WTC11 (cell line): ENCODE measurements at regions of chr7 and their contacts with region 1.

Region 1: DNA sequence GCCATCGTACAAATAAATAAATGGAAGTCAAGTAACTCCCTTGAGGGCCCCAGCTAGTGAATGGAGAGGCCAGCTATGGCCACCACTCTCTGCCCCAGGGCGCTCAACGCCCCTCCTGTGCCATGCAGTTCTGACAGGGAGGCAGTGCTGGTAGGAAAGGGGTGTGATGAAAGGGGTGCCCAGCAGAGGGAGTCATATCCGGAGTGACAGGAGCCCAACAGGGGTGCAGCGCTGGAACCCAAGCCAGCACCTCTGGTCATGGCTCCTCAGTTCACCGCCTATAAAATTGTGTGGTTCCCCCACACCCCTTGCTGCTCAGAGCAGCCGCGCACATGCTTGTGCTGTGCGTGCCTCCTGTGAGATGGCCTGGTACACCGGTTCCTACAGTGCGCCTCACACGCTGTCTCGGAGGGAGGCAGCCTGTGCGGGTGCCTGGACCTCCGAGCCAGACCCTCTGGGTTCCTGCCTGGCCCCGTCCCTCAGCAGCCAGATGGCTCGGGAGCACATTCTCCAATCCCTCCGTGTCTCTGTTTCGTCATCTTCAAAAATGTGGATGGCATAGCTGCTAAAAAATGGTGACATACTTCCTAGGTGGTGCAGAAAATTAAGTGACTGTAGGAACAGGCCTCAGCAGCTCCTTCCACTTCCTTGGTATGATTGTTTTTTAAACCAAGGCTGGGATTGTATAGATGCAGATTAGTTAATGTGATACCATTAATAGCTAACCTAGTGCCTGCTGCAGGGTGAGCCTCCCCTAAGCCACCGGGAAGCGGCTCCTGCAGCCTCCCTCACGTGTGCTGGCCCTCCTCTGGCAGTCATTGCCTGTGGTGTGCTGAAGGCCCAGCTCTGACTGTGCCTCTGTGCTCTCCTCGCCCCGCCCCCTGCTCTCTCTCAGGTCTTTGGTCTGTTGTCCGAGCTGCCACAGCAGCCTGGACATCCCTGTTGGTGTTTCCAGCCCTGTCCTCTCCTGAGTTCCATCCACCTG is 125.8 kb downstream of the EGFR start:
- DNase-seq: peak; percentile 69
- ATAC-seq: peak; percentile 92
- H3K4me3 Mint-ChIP-seq: no peak overlapping the region
- H3K27ac Mint-ChIP-seq: no peak overlapping the region
- H3K4me1 Mint-ChIP-seq: peaks cover 3% of the 10 kb centered on the region; the same call in 1 of the 2 replicates
- H3K27me3 Mint-ChIP-seq: no peaks in the 10 kb centered on the region
- CTCF ChIP-seq: peak; percentile 43; the same call in 1 of the 2 replicates

Region 2: GRCh38 chr7:55250313-55250712 is 105.7 kb after region 1 on chr7:
- CTCF ChIA-PET with region 1: interaction called, 67 read pairs
- POLR2A ChIA-PET with region 1: no interaction called
- DNase-seq: peak; percentile 70
- ATAC-seq: peak; percentile 63
- H3K4me3 Mint-ChIP-seq: peak overlapping the region; percentile 1; the same call in 1 of the 2 replicates
- H3K27ac Mint-ChIP-seq: no peak overlapping the region
- H3K4me1 Mint-ChIP-seq: peaks cover 4% of the 10 kb centered on the region; the same call in 1 of the 2 replicates
- H3K27me3 Mint-ChIP-seq: peaks cover 41% of the 10 kb centered on the region
- CTCF ChIP-seq: peak; percentile 48; the same call in 1 of the 2 replicates